Sciatic nerve (tissue), 2 donors: ENCODE measurements at regions of chr6 and their contacts with region 1.

Region 1: GRCh38 chr6:30194797-30195690 is 18.2 kb downstream of the TRIM26 start:
- DNase-seq: no peak
- ATAC-seq: no peak

Region 2: GRCh38 chr6:30169658-30170614 is 25.1 kb before region 1 on chr6:
- intact Hi-C with region 1: loop called (anchors 1 kb)
- DNase-seq: no peak
- ATAC-seq: peak; percentile 71

Region 3: DNA sequence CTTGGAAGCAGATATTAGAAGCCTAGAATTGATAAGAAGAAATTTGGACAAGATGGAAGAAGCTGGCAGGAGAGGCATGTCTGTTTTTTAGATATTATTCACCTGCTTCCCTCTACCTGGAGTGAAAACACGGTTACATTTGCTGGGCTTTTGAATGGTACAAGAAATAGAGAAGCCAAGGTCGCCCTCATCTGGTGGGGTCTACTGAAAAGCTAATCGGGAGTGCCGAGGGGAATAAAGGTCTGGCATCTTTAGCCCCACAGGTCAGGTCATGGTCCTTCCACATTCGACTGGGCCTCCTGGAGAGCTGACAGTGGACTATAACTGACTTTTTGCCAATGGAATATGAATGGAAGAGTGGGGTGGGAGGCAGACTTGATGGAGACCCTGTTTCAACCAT is 1727.9 kb after region 1 on chr6:
- intact Hi-C with region 1: no loop called
- DNase-seq: no peak
- ATAC-seq: no peak